ENCODE measurements at regions of chr2 and their contacts with region 1.

Region 1: GRCh38 chr2:246489-247144 is 17.2 kb downstream of the SH3YL1 start:
- DNase-seq: peak; percentile 81
- ATAC-seq: peak; percentile 57
- H3K4me3 ChIP-seq: no peak overlapping the region
- H3K27ac ChIP-seq: no peak overlapping the region
- H3K4me1 ChIP-seq: peaks cover 54% of the 10 kb centered on the region
- H3K27me3 ChIP-seq: no peaks in the 10 kb centered on the region
- CTCF ChIP-seq: peak; percentile 70
- EP300 ChIP-seq: no peak
- POLR2A ChIP-seq: no peak
- RAD21 ChIP-seq: peak; percentile 39; the same call in 1 of the 2 replicates

Region 2: DNA sequence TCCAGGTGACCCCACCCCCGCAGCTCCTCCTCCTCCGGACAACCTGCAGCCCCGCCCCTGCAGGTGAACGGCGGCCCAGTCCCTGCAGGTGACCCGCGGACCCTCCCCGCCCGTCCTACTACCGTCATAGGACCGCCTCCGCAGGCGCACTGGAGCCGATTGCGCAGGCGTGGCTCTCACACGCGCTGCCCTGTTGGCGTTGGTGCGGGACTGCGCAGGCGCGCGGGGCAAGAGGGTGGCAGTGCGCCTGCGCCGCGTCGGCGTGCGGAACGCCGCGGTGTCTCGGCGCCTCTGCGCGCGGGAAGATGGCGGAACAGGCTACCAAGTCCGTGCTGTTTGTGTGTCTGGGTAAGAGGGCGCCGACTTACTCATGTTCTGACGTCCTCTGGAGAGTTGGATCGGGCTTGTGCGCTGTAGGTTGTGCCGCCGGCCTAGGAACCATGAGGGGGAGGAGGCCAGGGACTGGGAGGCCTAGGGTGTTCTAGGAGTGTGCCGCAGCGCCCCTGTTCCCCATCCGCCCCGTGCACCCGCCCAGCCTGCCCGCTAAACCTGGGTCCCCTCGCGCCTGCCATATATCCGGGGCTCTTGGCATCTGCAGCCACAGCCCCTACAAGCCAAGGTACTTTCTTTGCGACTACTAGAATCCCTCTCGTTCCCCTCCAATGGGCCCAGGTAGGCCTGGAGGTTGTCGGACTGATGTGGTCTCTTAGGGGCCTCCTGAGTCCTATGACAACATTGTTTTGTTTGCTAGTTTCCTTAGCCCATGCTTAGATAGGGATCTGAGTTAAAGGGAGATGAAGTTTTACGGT is 18.2 kb after region 1 on chr2 and contains the start of gene ACP1:
- CTCF ChIA-PET with region 1: interaction called, 6 read pairs
- POLR2A ChIA-PET with region 1: interaction called, 32 read pairs
- in situ Hi-C with region 1: no loop called
- intact Hi-C with region 1: loop called (anchors 1 kb)
- DNase-seq: peak; percentile 93
- ATAC-seq: peak; percentile 76
- H3K4me3 ChIP-seq: peak within 1 kb of the TSS; percentile 95 to 99 (median 96)
- H3K27ac ChIP-seq: peak within 1 kb of the TSS; percentile 84
- H3K4me1 ChIP-seq: peaks cover 83% of the 10 kb centered on the region
- H3K27me3 ChIP-seq: peaks cover 0 to 5% of the 10 kb centered on the region in 2 experiments; a peak in 1 of 5 replicates
- CTCF ChIP-seq: 0 out of 2 replicates have a peak, but pooled peaks have one; percentile 44
- EP300 ChIP-seq: 0 out of 4 replicates have a peak, but pooled peaks of 1 of the 2 experiments have one; percentile 13
- POLR2A ChIP-seq: peak; percentile 97 to 98
- RAD21 ChIP-seq: peak; percentile 65
- total RNA-seq, gene ACP1: 246 and 290 TPM in 2 replicates

Region 3: DNA sequence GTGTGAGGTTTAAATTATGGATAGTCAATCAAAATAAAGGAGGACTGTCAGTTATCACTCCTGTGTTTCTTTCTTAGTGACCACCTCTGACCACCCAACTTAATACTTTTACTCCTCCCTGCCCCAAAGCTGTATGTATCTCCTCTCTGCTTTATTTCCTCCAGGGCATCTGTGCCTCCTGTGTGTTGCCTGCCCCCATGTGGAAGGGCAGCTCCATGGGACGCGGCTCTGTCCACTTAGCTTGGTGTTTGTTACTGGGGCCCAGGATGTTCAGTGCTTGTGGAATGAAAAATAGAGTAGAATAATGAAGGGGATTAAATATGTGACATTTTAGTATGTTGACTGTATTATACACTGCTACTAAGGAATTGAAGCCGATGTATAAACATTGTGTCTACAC is 27.9 kb after region 1 on chr2:
- CTCF ChIA-PET with region 1: interaction called, 5 read pairs
- POLR2A ChIA-PET with region 1: interaction called, 3 read pairs
- in situ Hi-C with region 1: no loop called
- intact Hi-C with region 1: loop called (anchors 1 kb)
- DNase-seq: no peak
- ATAC-seq: peak; percentile 67
- H3K4me3 ChIP-seq: no peak overlapping the region
- H3K27ac ChIP-seq: no peak overlapping the region
- H3K4me1 ChIP-seq: peaks cover 37% of the 10 kb centered on the region
- H3K27me3 ChIP-seq: no peaks in the 10 kb centered on the region
- CTCF ChIP-seq: peak; percentile 64
- EP300 ChIP-seq: no peak
- POLR2A ChIP-seq: no peak
- RAD21 ChIP-seq: 0 out of 2 replicates have a peak, but pooled peaks have one; percentile 29

Region 4: GRCh38 chr2:290090-290722 is 43.6 kb after region 1 on chr2:
- CTCF ChIA-PET with region 1: interaction called, 34 read pairs
- POLR2A ChIA-PET with region 1: no interaction called
- in situ Hi-C with region 1: loop called (anchors 5 kb)
- intact Hi-C with region 1: loop called (anchors 1 kb)
- DNase-seq: peak; percentile 76
- ATAC-seq: peak; percentile 83
- H3K4me3 ChIP-seq: peak overlapping the region; percentile 55 to 82 (median 65)
- H3K27ac ChIP-seq: no peak overlapping the region
- H3K4me1 ChIP-seq: peaks cover 16% of the 10 kb centered on the region
- H3K27me3 ChIP-seq: peaks cover 3 to 19% of the 10 kb centered on the region in 2 experiments
- CTCF ChIP-seq: peak; percentile 96
- EP300 ChIP-seq: no peak
- POLR2A ChIP-seq: no peak
- RAD21 ChIP-seq: peak; percentile 96